Mucosa of descending colon (tissue), 3 donors: ENCODE measurements at regions of chr1 and their contacts with region 1.

Region 1: DNA sequence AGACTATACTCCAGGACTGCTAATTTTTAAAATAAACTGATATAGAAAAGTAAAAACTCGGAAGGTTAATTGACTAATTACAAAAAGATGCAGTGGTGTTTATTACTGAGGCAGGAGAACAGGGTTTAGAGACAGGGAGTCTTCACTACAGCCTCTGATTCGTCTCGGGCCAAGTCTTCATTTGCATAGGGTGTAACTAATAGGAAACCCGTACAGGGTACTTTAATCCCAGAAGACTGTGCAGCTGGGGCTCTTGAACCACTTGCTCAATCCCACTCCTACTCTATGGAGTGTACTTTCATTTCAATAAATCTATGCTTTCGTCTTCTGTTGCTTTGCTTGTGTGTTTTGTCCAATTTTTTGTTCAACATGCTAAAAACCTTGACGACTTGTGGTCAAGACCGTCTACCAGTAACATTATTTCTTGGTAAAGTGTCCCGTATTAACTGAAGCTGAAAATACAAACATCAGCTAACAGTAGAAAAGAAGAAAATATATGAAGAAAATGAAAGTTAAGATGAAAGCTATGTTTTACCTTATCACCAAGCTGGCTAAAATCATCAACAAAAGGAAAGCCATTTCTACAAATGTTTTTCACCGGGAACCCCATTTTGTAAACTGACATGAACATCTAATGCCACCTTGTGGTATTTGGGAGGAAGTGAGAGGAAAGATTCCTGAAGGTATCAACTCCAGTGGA is 8.0 kb downstream of the SDHB start:
- DNase-seq: no peak
- ATAC-seq: peak; percentile 50
- H3K4me3 ChIP-seq: no peak overlapping the region
- H3K4me1 ChIP-seq: no peaks in the 10 kb centered on the region
- CTCF ChIP-seq: peak; percentile 52

Region 2: DNA sequence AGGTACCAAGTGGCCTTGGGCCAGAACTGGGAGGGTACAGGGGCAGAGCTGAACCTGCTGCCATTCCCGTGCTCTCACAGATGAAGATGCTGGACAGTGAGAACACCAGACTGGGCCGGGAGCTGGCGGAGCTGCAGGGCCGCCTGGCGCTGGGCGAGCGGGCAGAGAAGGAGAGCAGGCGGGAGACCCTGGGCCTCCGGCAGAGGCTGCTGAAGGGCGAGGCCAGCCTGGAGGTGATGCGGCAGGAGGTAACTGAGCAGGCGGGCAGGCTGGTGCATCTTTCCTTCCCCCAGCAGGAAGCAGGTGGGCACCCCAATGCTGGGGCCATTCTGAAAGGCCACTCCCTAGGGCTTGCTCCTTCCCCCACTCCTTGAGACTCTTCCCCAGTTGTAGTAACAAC is 87.3 kb before region 1 on chr1:
- intact Hi-C with region 1: loop called (anchors 5 to 10 kb)
- DNase-seq: no peak
- ATAC-seq: no peak
- H3K4me3 ChIP-seq: no peak overlapping the region
- H3K4me1 ChIP-seq: no peaks in the 10 kb centered on the region
- CTCF ChIP-seq: no peak